ENCODE measurements at regions of chr10 and their contacts with region 1.

Region 1: GRCh38 chr10:97701438-97702069 is 12.0 kb upstream of the MARVELD1 start:
- DNase-seq: peak in 28 of 35 experiments; percentile 11 to 78 (median 28)
- ATAC-seq: peak; percentile 82 to 95 (median 84)
- H3K4me3 ChIP-seq: no peak overlapping the region
- H3K4me3 Mint-ChIP-seq: no peak overlapping the region
- H3K27ac ChIP-seq: no peak overlapping the region
- H3K27ac Mint-ChIP-seq: no peak overlapping the region
- H3K4me1 ChIP-seq: no peaks in the 10 kb centered on the region
- H3K4me1 Mint-ChIP-seq: no peaks in the 10 kb centered on the region
- H3K27me3 ChIP-seq: peaks cover 0 to 10% of the 10 kb centered on the region in 2 experiments
- H3K27me3 Mint-ChIP-seq: peaks cover 0 to 4% of the 10 kb centered on the region in 2 donors

Region 2: GRCh38 chr10:97553575-97554031 is 148.0 kb before region 1 on chr10:
- CTCF ChIA-PET with region 1: interaction called in 1 of 2 experiments, 12 read pairs
- POLR2A ChIA-PET with region 1: no interaction called
- DNase-seq: peak in 33 of 35 experiments; percentile 3 to 71 (median 36)
- ATAC-seq: peak; percentile 84 to 92 (median 88)
- H3K4me3 ChIP-seq: no peak overlapping the region
- H3K4me3 Mint-ChIP-seq: no peak overlapping the region
- H3K27ac ChIP-seq: no peak overlapping the region
- H3K27ac Mint-ChIP-seq: no peak overlapping the region
- H3K4me1 ChIP-seq: no peaks in the 10 kb centered on the region
- H3K4me1 Mint-ChIP-seq: peaks cover 0 to 5% (median 4%) of the 10 kb centered on the region in 3 donors
- H3K27me3 ChIP-seq: peaks cover 0 to 2% of the 10 kb centered on the region in 2 experiments
- H3K27me3 Mint-ChIP-seq: no peaks in the 10 kb centered on the region

Region 3: DNA sequence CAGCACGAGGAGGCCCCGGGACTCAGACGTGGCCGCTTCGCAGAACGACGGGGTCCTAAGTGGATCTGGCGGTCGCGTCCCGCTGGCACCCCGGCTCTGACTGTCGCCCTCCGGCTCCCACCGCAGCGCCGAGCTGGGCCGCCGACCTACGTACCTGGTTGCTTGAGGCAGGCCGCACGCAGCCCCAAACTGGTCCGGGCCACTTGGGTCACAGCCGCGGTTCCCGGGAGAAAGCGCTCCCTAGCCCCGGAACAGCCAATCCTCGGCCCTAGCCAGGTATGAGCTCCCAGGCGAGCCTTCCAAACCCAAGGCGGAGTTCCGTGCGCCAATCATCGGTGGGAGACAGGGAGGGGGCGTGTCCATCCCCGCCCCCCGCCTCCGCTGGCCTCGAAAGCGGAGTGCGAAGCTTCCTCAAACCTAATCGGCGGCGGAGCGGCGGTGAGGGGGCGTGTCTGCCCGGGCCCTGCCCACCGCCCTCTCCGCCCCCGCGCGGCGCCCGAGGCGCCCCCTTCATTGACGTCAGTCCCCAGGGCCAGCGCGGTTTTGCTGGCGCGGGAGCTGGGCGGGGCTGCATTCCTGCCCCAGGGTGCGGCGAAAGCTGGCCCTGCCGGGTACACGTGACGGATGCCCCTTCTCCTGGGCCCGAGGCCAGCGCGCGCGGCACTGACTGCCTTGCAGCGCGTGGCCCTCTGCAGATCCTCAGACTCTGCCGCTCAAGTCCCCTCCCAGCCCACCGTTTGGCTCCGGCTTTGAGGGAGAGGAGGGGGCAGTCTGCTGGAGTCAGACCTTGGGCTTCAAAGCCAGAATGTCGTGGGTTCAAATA is 14.4 kb before region 1 on chr10 and contains the start of gene AVPI1:
- CTCF ChIA-PET with region 1: interaction called, 7 to 22 read pairs
- POLR2A ChIA-PET with region 1: interaction called in 1 of 2 experiments, 7 read pairs
- DNase-seq: peak; percentile 82 to 97 (median 94)
- ATAC-seq: peak; percentile 90 to 97 (median 91)
- H3K4me3 ChIP-seq: peak within 1 kb of the TSS; percentile 71 to 76
- H3K4me3 Mint-ChIP-seq: peak within 1 kb of the TSS; percentile 82 to 88 (median 85)
- H3K27ac ChIP-seq: peak within 1 kb of the TSS; percentile 70
- H3K27ac Mint-ChIP-seq: peak within 1 kb of the TSS; percentile 47 to 79
- H3K4me1 ChIP-seq: peaks cover 0 to 25% of the 10 kb centered on the region in 2 experiments
- H3K4me1 Mint-ChIP-seq: peaks cover 18 to 32% (median 22%) of the 10 kb centered on the region in 3 donors
- H3K27me3 ChIP-seq: no peaks in the 10 kb centered on the region
- H3K27me3 Mint-ChIP-seq: no peaks in the 10 kb centered on the region
- total RNA-seq, gene AVPI1: 2.4 to 10.0 (median 3.6) TPM

Region 4: DNA sequence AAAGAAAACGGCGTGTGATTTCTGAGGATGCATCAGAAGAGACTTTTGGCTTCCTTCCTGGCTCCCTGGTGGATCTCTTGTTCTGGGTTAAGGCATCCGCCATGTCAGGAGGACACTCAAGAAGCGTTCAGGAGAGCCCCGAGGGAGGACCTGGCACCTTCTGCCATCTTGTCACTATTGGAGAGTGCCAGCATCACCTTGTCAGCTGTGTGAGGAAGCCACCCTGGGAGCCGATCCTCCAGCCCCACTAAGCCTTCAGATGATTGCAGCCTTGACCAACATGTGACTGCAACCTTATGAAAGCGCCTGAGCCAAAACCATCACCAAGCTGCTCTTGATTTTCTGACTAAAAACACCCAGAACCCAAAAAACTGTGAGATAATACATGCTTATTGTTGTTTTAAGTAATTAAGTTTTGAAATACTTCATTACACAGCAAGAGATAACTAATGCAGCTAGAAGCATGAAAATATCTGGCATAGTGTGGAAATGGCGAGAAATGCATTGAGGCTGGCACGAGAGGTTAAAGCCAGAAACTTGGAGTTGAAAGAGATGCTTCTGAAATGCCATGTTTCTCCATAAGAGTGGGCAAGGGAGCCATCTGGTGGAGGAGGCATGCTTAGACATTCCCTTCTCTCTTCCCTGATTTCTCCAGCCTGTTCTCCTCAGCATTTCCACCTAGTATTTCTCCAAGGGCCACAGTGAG is 29.9 kb after region 1 on chr10:
- CTCF ChIA-PET with region 1: interaction called, 3 to 29 read pairs
- POLR2A ChIA-PET with region 1: interaction called in 1 of 2 experiments, 4 read pairs
- DNase-seq: peak in 27 of 35 experiments; percentile 13 to 81 (median 44)
- ATAC-seq: peak; percentile 53 to 69 (median 60)
- H3K4me3 ChIP-seq: no peak overlapping the region
- H3K4me3 Mint-ChIP-seq: no peak overlapping the region
- H3K27ac ChIP-seq: no peak overlapping the region
- H3K27ac Mint-ChIP-seq: no peak overlapping the region
- H3K4me1 ChIP-seq: peaks cover 0 to 5% of the 10 kb centered on the region in 2 experiments
- H3K4me1 Mint-ChIP-seq: peaks cover 6 to 11% (median 11%) of the 10 kb centered on the region in 3 donors
- H3K27me3 ChIP-seq: peaks cover 0 to 15% of the 10 kb centered on the region in 2 experiments
- H3K27me3 Mint-ChIP-seq: peaks cover 0 to 13% of the 10 kb centered on the region in 2 donors

Region 5: GRCh38 chr10:97736902-97737769 is 35.6 kb after region 1 on chr10 and contains the start of gene ZFYVE27:
- CTCF ChIA-PET with region 1: interaction called in 1 of 2 experiments, 29 read pairs
- POLR2A ChIA-PET with region 1: no interaction called
- DNase-seq: peak; percentile 85 to 98 (median 92)
- ATAC-seq: peak; percentile 88 to 94 (median 91)
- H3K4me3 ChIP-seq: peak within 1 kb of the TSS; percentile 91 to 96
- H3K4me3 Mint-ChIP-seq: peak within 1 kb of the TSS; percentile 92 to 93 (median 93)
- H3K27ac ChIP-seq: peak within 1 kb of the TSS; percentile 89
- H3K27ac Mint-ChIP-seq: peak within 1 kb of the TSS; percentile 94 to 96
- H3K4me1 ChIP-seq: peaks cover 6 to 36% of the 10 kb centered on the region in 2 experiments
- H3K4me1 Mint-ChIP-seq: peaks cover 53 to 61% (median 57%) of the 10 kb centered on the region in 3 donors
- H3K27me3 ChIP-seq: no peaks in the 10 kb centered on the region
- H3K27me3 Mint-ChIP-seq: no peaks in the 10 kb centered on the region
- total RNA-seq, gene ZFYVE27: 57.6 to 68.0 (median 60.0) TPM

Region 6: DNA sequence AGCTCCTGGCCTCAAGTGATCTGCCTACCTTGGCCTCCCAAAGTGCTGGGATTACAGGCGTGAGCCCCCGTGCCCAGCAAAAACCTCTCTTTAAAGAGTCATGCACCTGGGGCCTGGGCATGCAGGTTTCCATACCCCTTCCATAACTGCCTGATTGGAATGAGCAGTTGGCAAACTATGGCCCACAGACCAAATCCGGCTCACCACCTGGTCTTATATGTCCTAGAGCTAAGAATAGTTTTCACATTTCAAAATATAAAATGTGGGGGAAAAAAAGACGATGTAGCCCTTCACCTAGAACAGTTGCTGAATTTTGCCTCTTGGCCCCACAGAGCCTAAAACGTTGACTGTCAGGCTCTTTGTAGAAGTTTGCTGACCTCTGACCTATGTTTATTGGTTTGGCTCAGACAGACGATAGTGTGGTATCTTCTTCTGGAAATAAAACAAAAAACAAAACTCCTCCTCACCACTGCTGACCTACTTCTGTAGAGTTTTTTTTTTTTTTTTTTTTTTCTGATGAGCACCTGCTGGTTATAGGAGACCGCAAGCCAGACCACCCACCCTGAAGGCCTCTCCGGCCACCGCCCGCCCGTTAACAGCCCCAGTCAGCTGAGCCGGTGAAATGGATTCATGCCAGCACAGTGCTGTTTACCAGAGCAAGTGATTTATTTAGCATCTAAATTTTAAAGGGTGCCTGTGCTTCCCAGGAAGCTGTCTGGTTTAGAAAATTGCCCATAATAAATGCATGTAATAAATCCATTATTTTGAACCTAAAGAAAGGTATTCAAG is 103.7 kb after region 1 on chr10:
- CTCF ChIA-PET with region 1: no interaction called
- POLR2A ChIA-PET with region 1: no interaction called
- DNase-seq: no peak
- ATAC-seq: no peak
- H3K4me3 ChIP-seq: no peak overlapping the region
- H3K4me3 Mint-ChIP-seq: no peak overlapping the region
- H3K27ac ChIP-seq: no peak overlapping the region
- H3K27ac Mint-ChIP-seq: no peak overlapping the region
- H3K4me1 ChIP-seq: no peaks in the 10 kb centered on the region
- H3K4me1 Mint-ChIP-seq: peaks cover 0 to 7% (median 2%) of the 10 kb centered on the region in 3 donors
- H3K27me3 ChIP-seq: peaks cover 0 to 8% of the 10 kb centered on the region in 2 experiments
- H3K27me3 Mint-ChIP-seq: no peaks in the 10 kb centered on the region

Region 7: DNA sequence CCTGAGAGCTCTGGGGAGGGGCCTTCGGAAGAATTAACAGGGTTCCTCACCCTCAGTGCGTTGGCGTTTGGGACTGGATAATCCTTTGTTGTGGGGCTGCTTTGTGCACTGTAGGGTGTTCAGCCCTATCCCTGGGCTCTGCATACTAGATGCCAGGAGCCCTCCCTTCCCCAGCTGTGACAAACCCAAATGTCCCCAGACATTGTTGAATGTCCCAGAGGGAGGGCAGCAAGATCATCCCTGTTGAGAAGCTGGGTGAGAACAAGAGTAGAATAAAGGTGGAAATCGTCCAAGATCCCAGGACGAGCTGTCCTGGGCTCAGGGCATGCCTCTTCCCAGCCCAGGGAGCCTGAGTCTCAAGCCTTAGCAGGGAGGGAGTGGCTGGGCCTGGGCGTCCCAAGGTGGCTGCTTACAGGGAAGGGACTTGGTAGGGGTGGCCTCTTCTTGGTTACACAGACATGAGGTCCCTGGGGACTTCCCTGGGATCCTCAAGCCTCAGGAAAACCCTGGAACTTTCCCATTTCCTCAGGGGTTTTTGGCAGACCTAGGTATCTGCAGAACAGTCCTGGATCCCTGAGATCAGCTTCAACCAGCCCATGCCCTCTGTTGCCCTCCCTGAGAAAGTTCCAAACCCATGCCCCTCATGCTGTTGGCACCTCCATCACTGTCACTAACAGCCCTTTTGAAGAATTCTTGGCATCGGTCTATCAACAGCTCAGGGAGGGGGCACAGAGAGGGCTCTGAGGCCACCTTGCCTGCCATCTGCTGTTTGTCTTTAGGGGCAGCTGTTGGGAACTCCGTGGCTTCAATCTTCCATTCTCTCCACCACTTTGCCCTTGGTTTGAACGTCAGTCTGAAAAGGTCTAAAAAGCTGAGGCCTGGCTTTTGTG is 201.8 kb after region 1 on chr10:
- CTCF ChIA-PET with region 1: no interaction called
- POLR2A ChIA-PET with region 1: no interaction called
- DNase-seq: no peak
- ATAC-seq: peak in 1 of 4 experiments; percentile 13
- H3K4me3 ChIP-seq: no peak overlapping the region
- H3K4me3 Mint-ChIP-seq: no peak overlapping the region
- H3K27ac ChIP-seq: no peak overlapping the region
- H3K27ac Mint-ChIP-seq: no peak overlapping the region
- H3K4me1 ChIP-seq: no peaks in the 10 kb centered on the region
- H3K4me1 Mint-ChIP-seq: no peaks in the 10 kb centered on the region
- H3K27me3 ChIP-seq: peaks cover 0 to 69% of the 10 kb centered on the region in 2 experiments
- H3K27me3 Mint-ChIP-seq: peaks cover 18 to 31% of the 10 kb centered on the region in 2 donors

Measured in T-cell (primary cell).